CD4-positive, alpha-beta T cell (primary cell): ENCODE measurements at regions of chr4 and their contacts with region 1.

Region 1: DNA sequence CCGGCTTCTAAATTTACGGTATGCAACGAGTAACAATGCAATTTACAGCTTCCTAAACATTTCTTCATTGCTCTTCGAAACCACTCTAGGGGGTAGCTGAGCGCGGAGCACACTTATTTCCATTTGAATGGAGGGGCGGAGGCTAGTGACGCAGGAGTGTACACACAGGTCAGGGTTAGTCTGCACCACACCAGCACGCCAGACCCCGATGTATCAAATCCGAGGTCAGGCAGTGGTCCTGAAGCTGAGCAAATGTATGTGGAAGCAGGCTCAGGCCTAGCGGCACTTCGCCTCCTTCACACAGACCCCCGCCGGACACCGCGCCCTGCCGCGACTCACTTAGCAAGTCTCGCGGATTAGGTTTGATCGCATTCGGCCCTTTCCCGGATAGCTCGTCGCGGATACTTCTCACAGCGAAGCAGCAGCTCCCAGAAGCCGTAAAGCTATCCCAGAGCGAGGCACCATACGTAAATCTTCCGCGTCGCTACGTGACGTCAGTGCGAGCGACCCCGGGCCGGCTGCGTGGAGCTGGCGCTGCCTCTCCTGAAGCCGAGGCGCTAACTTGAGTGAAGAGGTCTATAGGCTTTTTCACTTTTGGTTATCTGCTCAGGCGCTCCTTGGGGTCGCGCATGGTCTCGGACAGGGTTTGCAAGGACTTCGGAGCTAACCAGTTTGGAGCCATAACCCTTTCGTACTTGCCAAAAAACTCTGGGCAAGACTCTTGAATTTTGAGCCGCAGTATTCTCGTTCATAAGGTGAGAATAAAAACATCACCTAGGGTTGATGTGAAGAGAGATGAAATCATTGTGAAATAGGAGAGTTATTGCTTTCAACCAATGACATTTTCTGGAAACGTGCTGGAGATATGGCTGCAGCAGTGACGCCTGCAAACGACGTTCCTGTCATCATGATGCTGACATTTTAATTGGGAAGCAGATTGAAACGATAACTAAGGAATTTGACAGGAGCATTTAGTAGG is at the start of gene AASDH:
- DNase-seq: peak; percentile 85 to 99 (median 96)
- ATAC-seq: peak; percentile 86
- H3K4me3 ChIP-seq: peak within 1 kb of the TSS; percentile 97
- H3K4me3 Mint-ChIP-seq: peak within 1 kb of the TSS; percentile 93
- H3K27ac ChIP-seq: peak within 1 kb of the TSS; percentile 91 to 97
- H3K27ac Mint-ChIP-seq: peak within 1 kb of the TSS; percentile 99
- H3K4me1 ChIP-seq: peaks cover 17% of the 10 kb centered on the region
- H3K4me1 Mint-ChIP-seq: peaks cover 46% of the 10 kb centered on the region
- H3K27me3 ChIP-seq: no peaks in the 10 kb centered on the region
- H3K27me3 Mint-ChIP-seq: no peaks in the 10 kb centered on the region
- CTCF ChIP-seq: no peak
- total RNA-seq, gene AASDH: 10.2 to 10.6 TPM

Region 2: DNA sequence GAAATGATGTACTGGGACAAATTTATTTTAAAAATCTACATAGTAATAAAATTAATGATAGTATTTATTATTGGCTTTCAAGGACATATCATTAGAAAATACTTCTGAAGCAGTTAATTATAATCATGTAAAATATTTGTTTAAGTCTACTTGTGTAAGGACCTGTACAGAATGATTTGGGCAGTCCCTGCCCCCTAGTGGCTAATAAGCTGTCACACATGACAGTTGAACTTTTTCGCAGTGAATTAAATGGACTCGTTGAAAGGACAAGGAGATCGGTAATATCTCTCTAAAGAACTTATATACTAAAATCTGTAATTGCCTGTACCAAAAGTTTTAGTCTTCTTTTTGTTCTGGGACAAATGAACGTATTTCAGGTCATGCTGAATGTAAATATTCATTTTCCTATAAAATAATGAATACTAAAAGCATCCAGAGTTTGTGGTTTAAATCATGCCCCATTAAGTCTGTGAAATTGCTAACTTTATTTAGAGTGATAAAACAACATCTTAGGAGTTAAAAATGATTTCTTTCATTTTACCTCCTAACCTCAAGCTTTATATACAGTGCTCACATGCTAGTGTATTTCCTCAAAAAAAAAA is 520.2 kb before region 1 on chr4:
- CTCF ChIA-PET with region 1: no interaction called
- POLR2A ChIA-PET with region 1: no interaction called
- intact Hi-C with region 1: loop called in 1 of 2 experiments (anchors 10 kb)
- DNase-seq: peak in 6 of 14 experiments; percentile 9 to 74 (median 50)
- ATAC-seq: peak; percentile 91
- H3K4me3 ChIP-seq: no peak overlapping the region
- H3K4me3 Mint-ChIP-seq: no peak overlapping the region
- H3K27ac ChIP-seq: no peak overlapping the region
- H3K27ac Mint-ChIP-seq: no peak overlapping the region
- H3K4me1 ChIP-seq: no peaks in the 10 kb centered on the region
- H3K4me1 Mint-ChIP-seq: peaks cover 17% of the 10 kb centered on the region
- H3K27me3 ChIP-seq: no peaks in the 10 kb centered on the region
- H3K27me3 Mint-ChIP-seq: no peaks in the 10 kb centered on the region
- CTCF ChIP-seq: peak; percentile 99

Region 3: DNA sequence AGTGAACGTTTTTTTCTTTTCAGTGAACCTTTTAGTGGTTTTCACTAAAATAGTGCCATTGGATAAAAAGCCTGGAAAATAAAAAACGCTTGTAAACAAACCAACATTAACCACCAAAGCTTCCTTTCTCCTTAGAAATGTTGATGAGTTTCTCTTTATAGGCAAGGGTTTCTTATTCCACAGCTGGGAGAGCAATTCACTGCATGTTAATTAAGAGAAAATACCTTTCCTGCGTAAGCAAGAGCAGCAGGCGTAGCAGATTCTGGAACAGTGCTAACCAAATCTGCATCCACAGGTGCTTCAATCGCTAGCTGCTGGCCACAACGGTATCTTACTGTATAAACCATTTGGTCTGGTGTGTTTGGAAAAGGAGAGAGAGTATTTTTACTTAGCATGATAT is 13.2 kb after region 1 on chr4:
- CTCF ChIA-PET with region 1: interaction called, 3 read pairs
- POLR2A ChIA-PET with region 1: interaction called, 15 read pairs
- intact Hi-C with region 1: no loop called
- DNase-seq: no peak
- ATAC-seq: no peak
- H3K4me3 ChIP-seq: no peak overlapping the region
- H3K4me3 Mint-ChIP-seq: no peak overlapping the region
- H3K27ac ChIP-seq: no peak overlapping the region
- H3K27ac Mint-ChIP-seq: no peak overlapping the region
- H3K4me1 ChIP-seq: no peaks in the 10 kb centered on the region
- H3K4me1 Mint-ChIP-seq: no peaks in the 10 kb centered on the region
- H3K27me3 ChIP-seq: no peaks in the 10 kb centered on the region
- H3K27me3 Mint-ChIP-seq: no peaks in the 10 kb centered on the region
- CTCF ChIP-seq: no peak

Region 4: DNA sequence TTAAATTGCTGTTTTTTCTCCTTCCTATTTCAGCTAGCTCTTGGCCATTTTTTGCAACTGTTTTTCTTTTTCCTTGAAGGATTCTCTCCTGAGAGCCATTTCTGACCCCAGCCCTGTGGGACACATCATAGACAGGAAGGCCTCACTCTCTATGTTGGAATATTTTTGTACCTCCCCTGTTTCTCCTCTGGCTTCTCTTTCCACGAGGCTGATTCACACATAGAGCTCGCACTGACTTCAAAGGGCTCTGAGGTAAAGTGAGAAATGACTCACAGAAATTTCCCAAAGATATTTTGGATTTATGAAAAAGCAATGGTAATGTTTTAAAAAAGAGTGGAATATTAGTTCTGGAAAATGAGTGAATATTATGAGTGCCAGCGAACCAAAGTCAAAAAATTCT is 904.6 kb after region 1 on chr4:
- CTCF ChIA-PET with region 1: no interaction called
- POLR2A ChIA-PET with region 1: no interaction called
- intact Hi-C with region 1: no loop called
- DNase-seq: no peak
- ATAC-seq: no peak
- H3K4me3 ChIP-seq: no peak overlapping the region
- H3K4me3 Mint-ChIP-seq: no peak overlapping the region
- H3K27ac ChIP-seq: no peak overlapping the region
- H3K27ac Mint-ChIP-seq: no peak overlapping the region
- H3K4me1 ChIP-seq: no peaks in the 10 kb centered on the region
- H3K4me1 Mint-ChIP-seq: no peaks in the 10 kb centered on the region
- H3K27me3 ChIP-seq: no peaks in the 10 kb centered on the region
- H3K27me3 Mint-ChIP-seq: no peaks in the 10 kb centered on the region
- CTCF ChIP-seq: no peak